ENCODE measurements at regions of chr22 and their contacts with region 1.

Region 1: GRCh38 chr22:50030297-50031188 is 18.0 kb upstream of the IL17REL start:
- DNase-seq: peak; percentile 75 to 87 (median 77)
- H3K4me3 ChIP-seq: no peak overlapping the region
- H3K4me3 Mint-ChIP-seq: no peak overlapping the region
- H3K27ac ChIP-seq: no peak overlapping the region
- H3K27ac Mint-ChIP-seq: no peak overlapping the region
- H3K4me1 ChIP-seq: no peaks in the 10 kb centered on the region
- H3K4me1 Mint-ChIP-seq: peaks cover 8 to 12% (median 12%) of the 10 kb centered on the region in 3 donors
- H3K27me3 ChIP-seq: no peaks in the 10 kb centered on the region
- H3K27me3 Mint-ChIP-seq: peaks cover 5 to 17% of the 10 kb centered on the region in 2 donors

Region 2: DNA sequence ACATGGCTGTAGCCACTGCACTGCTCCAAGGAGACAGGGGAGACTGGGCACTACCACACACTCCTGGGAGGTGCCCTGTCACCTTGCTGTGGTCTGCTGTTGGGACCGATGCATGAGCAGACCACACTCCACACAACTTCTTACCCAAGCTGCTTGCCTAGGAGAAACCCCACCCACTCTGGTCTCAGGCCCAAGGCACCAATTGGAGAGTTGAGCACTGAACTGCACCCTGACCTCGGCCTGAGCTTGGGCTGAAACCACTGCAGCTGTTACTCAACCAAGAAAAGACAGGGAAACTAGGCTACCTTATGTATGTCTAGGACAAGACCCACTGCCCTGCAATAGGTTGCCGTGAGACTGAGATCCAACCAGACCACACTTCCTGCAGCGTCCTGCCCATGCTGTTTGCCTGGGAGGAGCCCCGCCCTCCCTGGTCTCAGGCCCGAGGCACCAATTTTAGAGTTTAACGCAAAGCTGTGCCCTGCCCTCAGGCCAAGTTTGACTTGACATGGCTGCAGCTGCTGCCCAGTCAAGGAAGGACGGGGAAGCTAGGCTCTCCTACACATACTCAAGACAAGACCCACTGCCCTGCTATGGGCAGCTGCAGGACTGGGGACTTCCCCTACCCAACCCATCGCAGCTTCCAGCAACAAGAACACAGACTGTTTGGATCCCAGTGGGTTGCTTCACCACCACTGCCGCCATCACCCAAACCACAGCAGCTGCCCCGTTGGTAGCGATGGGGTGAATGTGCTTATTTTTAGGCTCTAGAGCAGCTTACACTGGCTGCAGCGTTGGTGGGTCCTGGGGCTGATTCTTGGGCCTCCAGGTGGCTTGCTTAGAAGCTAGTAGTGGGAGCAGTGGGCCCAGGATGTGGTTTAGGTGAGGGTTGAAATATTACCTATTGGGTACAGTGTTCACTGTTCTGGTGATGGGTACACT is 269.6 kb before region 1 on chr22:
- CTCF ChIA-PET with region 1: interaction called, 12 read pairs
- POLR2A ChIA-PET with region 1: no interaction called
- DNase-seq: no peak
- H3K4me3 ChIP-seq: no peak overlapping the region
- H3K4me3 Mint-ChIP-seq: no peak overlapping the region
- H3K27ac ChIP-seq: no peak overlapping the region
- H3K27ac Mint-ChIP-seq: peak overlapping the region in 3 of 8 donors; percentile 27 to 65 (median 53)
- H3K4me1 ChIP-seq: peaks cover 6% of the 10 kb centered on the region
- H3K4me1 Mint-ChIP-seq: peaks cover 12 to 19% (median 13%) of the 10 kb centered on the region in 3 donors
- H3K27me3 ChIP-seq: no peaks in the 10 kb centered on the region
- H3K27me3 Mint-ChIP-seq: peaks cover 0 to 1% of the 10 kb centered on the region in 2 donors

Region 3: GRCh38 chr22:49925525-49926128 is 104.9 kb before region 1 on chr22:
- CTCF ChIA-PET with region 1: interaction called, 40 read pairs
- POLR2A ChIA-PET with region 1: no interaction called
- DNase-seq: peak; percentile 61 to 86 (median 82)
- H3K4me3 ChIP-seq: peak overlapping the region; percentile 49
- H3K4me3 Mint-ChIP-seq: peak overlapping the region; percentile 61 to 94 (median 78)
- H3K27ac ChIP-seq: peak overlapping the region; percentile 69
- H3K27ac Mint-ChIP-seq: peak overlapping the region; percentile 93 to 99 (median 97)
- H3K4me1 ChIP-seq: peaks cover 26% of the 10 kb centered on the region
- H3K4me1 Mint-ChIP-seq: peaks cover 16 to 42% (median 25%) of the 10 kb centered on the region in 3 donors
- H3K27me3 ChIP-seq: no peaks in the 10 kb centered on the region
- H3K27me3 Mint-ChIP-seq: no peaks in the 10 kb centered on the region

Region 4: DNA sequence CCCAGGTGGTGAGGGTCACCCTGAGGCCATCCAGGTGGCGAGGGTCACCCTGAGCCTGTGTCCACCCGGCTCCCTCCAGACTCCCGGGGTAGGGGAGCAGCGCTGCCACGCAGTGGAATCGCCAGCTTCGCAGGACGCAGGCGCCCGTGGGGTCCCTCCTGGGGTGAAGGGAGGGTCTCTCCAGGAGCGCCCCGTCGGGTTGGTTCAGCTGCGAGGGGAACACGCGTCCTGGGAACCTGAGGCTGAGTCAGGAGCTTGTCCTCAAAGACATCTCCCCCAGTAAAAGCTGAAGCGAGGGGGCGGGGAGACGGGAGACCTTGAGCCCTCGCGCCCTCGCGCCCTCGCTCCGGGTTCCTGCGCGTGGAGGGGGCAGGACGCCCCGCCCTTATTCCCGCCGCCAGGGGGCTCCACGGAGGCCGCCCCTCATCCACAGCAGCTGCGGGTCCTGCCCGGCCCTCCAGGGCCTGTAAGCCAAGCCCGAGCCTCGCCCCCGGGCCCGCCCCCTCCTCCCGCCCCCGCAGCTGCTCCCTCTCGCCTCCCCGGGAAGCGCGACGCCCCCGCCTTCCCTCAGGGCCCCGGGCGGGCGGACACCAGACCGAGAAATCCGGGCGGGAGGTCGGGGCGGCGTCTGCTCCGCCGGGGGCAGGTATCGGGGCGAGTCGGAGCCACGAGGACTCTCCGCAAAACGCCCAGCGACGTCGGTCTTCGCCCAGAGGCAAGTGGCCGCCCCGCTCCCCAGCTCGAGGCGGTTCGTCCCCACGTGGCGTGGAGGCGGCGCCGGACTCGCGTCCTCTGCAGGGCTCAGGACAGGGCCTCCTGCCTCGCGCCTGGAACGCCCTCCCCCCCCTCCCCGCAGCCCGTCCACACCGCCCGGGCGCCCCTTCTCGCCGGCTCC is 47.1 kb before region 1 on chr22:
- CTCF ChIA-PET with region 1: interaction called, 17 read pairs
- POLR2A ChIA-PET with region 1: no interaction called
- DNase-seq: peak in 1 of 5 donors; percentile 46
- H3K4me3 ChIP-seq: no peak overlapping the region
- H3K4me3 Mint-ChIP-seq: peak overlapping the region in 1 of 7 donors; percentile 75
- H3K27ac ChIP-seq: no peak overlapping the region
- H3K27ac Mint-ChIP-seq: no peak overlapping the region
- H3K4me1 ChIP-seq: no peaks in the 10 kb centered on the region
- H3K4me1 Mint-ChIP-seq: peaks cover 3 to 9% (median 8%) of the 10 kb centered on the region in 3 donors
- H3K27me3 ChIP-seq: peaks cover 10% of the 10 kb centered on the region
- H3K27me3 Mint-ChIP-seq: peaks cover 29 to 49% of the 10 kb centered on the region in 2 donors

Region 5: GRCh38 chr22:50007057-50007511 is 23.5 kb before region 1 on chr22:
- CTCF ChIA-PET with region 1: interaction called, 14 read pairs
- POLR2A ChIA-PET with region 1: no interaction called
- DNase-seq: no peak
- H3K4me3 ChIP-seq: no peak overlapping the region
- H3K4me3 Mint-ChIP-seq: no peak overlapping the region
- H3K27ac ChIP-seq: no peak overlapping the region
- H3K27ac Mint-ChIP-seq: peak overlapping the region in 3 of 8 donors; percentile 55 to 70 (median 57)
- H3K4me1 ChIP-seq: peaks cover 14% of the 10 kb centered on the region
- H3K4me1 Mint-ChIP-seq: peaks cover 7 to 17% (median 9%) of the 10 kb centered on the region in 3 donors
- H3K27me3 ChIP-seq: peaks cover 6% of the 10 kb centered on the region
- H3K27me3 Mint-ChIP-seq: peaks cover 5 to 7% of the 10 kb centered on the region in 2 donors

Region 6: GRCh38 chr22:50074551-50075530 is 44.3 kb after region 1 on chr22:
- CTCF ChIA-PET with region 1: no interaction called
- POLR2A ChIA-PET with region 1: no interaction called
- DNase-seq: no peak
- H3K4me3 ChIP-seq: no peak overlapping the region
- H3K4me3 Mint-ChIP-seq: no peak overlapping the region
- H3K27ac ChIP-seq: no peak overlapping the region
- H3K27ac Mint-ChIP-seq: no peak overlapping the region
- H3K4me1 ChIP-seq: no peaks in the 10 kb centered on the region
- H3K4me1 Mint-ChIP-seq: no peaks in the 10 kb centered on the region
- H3K27me3 ChIP-seq: no peaks in the 10 kb centered on the region
- H3K27me3 Mint-ChIP-seq: peaks cover 0 to 3% of the 10 kb centered on the region in 2 donors

Measured in CD8-positive, alpha-beta memory T cell (primary cell).